ENCODE measurements at regions of chr12 and their contacts with region 1.

Region 1: GRCh38 chr12:101697197-101697929 is at the start of gene CHPT1:
- DNase-seq: peak; percentile 79 to 90
- ATAC-seq: peak; percentile 51 to 52
- H3K4me3 ChIP-seq: peak within 1 kb of the TSS; percentile 72 to 94 (median 84)
- H3K27ac ChIP-seq: peak within 1 kb of the TSS; percentile 96 to 98 (median 96)
- H3K4me1 ChIP-seq: peaks cover 41 to 44% of the 10 kb centered on the region in 2 donors
- H3K27me3 ChIP-seq: no peaks in the 10 kb centered on the region
- CTCF ChIP-seq: no peak
- POLR2A ChIP-seq: peak; percentile 19 to 47
- total RNA-seq, gene CHPT1: 32.3 to 67.3 (median 36.1) TPM

Region 2: GRCh38 chr12:101490286-101490920 is 207.0 kb before region 1 on chr12:
- in situ Hi-C with region 1: no loop called
- intact Hi-C with region 1: loop called (anchors 5 kb)
- DNase-seq: peak; percentile 42 to 61
- ATAC-seq: peak; percentile 89 to 98
- H3K4me3 ChIP-seq: no peak overlapping the region
- H3K27ac ChIP-seq: peak overlapping the region; percentile 73 to 83 (median 80)
- H3K4me1 ChIP-seq: peaks cover 14 to 16% of the 10 kb centered on the region in 2 donors
- H3K27me3 ChIP-seq: no peaks in the 10 kb centered on the region
- CTCF ChIP-seq: peak; percentile 53 to 77 (median 66)
- POLR2A ChIP-seq: no peak

Region 3: GRCh38 chr12:101616027-101616494 is 81.3 kb before region 1 on chr12:
- in situ Hi-C with region 1: no loop called
- intact Hi-C with region 1: loop called (anchors 2 kb)
- DNase-seq: no peak
- ATAC-seq: peak; percentile 26 to 72
- H3K4me3 ChIP-seq: peak overlapping the region in 2 of 4 donors; percentile 15 to 24
- H3K27ac ChIP-seq: peak overlapping the region; percentile 85 to 93 (median 92)
- H3K4me1 ChIP-seq: peaks cover 94 to 96% of the 10 kb centered on the region in 2 donors
- H3K27me3 ChIP-seq: no peaks in the 10 kb centered on the region
- CTCF ChIP-seq: no peak
- POLR2A ChIP-seq: peak in 1 of 2 donors; percentile 36

Region 4: DNA sequence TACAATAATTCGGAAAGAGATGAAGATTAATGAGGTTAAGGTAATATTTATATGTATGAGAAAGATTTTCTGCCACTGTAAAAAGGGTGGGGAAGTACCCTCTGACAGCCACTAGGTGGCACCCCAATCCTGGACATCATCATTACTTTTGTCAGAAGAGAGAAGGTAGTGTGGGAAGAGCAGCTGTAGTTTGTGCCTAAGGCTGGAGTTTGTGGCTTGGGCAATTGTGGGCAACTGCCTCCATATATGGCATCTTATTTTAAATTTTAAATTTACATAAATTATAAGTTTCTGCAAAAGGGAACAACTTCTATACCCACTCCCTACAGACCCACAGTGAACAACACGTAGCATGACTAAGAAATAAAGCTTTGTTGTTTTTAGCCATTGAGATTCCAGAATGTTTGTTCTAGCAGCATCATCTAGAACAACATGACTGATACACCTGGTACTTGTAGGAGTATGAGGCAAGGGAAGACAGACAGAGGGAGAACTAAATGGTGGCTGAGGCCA is 76.3 kb after region 1 on chr12:
- in situ Hi-C with region 1: no loop called
- intact Hi-C with region 1: no loop called
- DNase-seq: peak; percentile 30 to 55
- ATAC-seq: peak; percentile 81 to 86
- H3K4me3 ChIP-seq: no peak overlapping the region
- H3K27ac ChIP-seq: peak overlapping the region in 1 of 4 donors; percentile 3
- H3K4me1 ChIP-seq: peaks cover 12 to 22% of the 10 kb centered on the region in 2 donors
- H3K27me3 ChIP-seq: no peaks in the 10 kb centered on the region
- CTCF ChIP-seq: peak; percentile 89 to 94 (median 91)
- POLR2A ChIP-seq: no peak